OCI-LY7 (cell line): ENCODE measurements at regions of chr1 and their contacts with region 1.

Region 1: GRCh38 chr1:33443080-33443704 is 12.3 kb upstream of the PHC2 start:
- DNase-seq: no peak
- H3K4me3 ChIP-seq: no peak overlapping the region
- H3K27ac ChIP-seq: no peak overlapping the region
- H3K4me1 ChIP-seq: no peaks in the 10 kb centered on the region
- CTCF ChIP-seq: no peak

Region 2: DNA sequence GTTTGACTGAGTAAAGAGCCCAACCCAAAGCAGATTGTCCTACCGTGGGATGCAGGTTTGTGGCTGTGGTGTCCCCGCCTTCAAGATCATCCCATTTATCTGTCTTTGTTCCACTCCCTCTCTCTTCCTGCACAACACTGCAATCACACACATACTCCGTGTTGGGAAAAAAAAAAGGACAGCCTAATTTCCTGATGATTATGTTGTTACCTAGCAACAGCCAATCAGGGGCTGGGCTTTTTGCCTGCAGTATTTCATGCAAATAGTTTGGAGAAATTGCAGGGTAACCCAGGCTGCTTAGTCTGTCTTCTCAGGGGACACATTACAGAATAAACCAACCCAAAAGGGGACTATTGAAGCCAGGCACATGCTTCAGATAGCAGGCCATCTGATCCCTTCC is 50.6 kb before region 1 on chr1:
- CTCF ChIA-PET with region 1: no interaction called
- POLR2A ChIA-PET with region 1: no interaction called
- intact Hi-C with region 1: loop called (anchors 5 kb)
- DNase-seq: no peak
- H3K4me3 ChIP-seq: no peak overlapping the region
- H3K27ac ChIP-seq: no peak overlapping the region
- H3K4me1 ChIP-seq: no peaks in the 10 kb centered on the region
- CTCF ChIP-seq: no peak